Heart left ventricle (tissue), 16 donors: ENCODE measurements at regions of chr10 and their contacts with region 1.

Region 1: GRCh38 chr10:114304017-114304570 is 65.0 kb downstream of the VWA2 start:
- DNase-seq: peak in 4 of 5 donors; percentile 82 to 87 (median 85)
- ATAC-seq: peak; percentile 79 to 89 (median 85)
- H3K4me3 ChIP-seq: peak overlapping the region in 11 of 12 donors; percentile 11 to 60 (median 46)
- H3K27ac ChIP-seq: peak overlapping the region in 11 of 12 donors; percentile 8 to 71 (median 52)
- H3K4me1 ChIP-seq: peaks cover 0 to 47% (median 13%) of the 10 kb centered on the region in 12 donors
- H3K27me3 ChIP-seq: no peaks in the 10 kb centered on the region
- CTCF ChIP-seq: peak; percentile 56 to 91 (median 79)
- POLR2A ChIP-seq: no peak

Region 2: DNA sequence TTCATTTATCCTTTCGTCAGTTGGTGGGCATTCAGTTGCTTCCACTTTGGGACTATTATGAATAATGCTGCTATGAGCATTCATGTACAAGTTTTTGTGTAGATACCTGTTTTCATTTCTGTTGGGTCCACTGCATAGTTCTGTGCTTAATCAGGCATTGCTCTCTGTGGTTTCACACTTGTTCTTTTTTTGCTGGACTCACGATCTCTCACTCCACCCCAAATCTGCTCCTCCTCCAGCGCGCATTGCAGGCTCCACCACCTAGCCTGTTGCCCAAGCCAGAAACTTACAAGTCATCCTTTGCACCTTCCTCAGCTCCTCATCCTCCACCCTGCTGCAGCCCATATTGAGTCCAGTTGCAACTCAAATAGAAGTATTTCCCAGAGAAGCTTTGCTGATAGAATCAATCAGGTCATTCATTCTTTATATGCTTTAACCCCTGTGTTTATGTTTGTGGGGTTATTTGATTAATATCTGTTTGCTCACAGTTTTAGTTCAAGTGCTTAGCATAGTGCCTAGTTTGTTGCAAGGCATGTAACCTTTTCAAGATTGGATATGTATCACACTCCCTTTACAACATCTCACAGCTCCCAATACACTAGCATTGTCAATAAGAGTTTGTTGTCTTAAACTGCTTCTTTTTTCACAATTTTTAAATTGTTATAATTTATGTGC is 116.9 kb after region 1 on chr10:
- intact Hi-C with region 1: loop called in 4 of 10 experiments (anchors 5 kb)
- DNase-seq: no peak
- ATAC-seq: no peak
- H3K4me3 ChIP-seq: no peak overlapping the region
- H3K27ac ChIP-seq: no peak overlapping the region
- H3K4me1 ChIP-seq: peaks cover 0 to 5% (median 0%) of the 10 kb centered on the region in 12 donors
- H3K27me3 ChIP-seq: no peaks in the 10 kb centered on the region
- CTCF ChIP-seq: no peak
- POLR2A ChIP-seq: no peak

Region 3: GRCh38 chr10:114437456-114438292 is 133.6 kb after region 1 on chr10:
- intact Hi-C with region 1: loop called in 6 of 10 experiments (anchors 5 kb)
- DNase-seq: no peak
- ATAC-seq: no peak
- H3K4me3 ChIP-seq: no peak overlapping the region
- H3K27ac ChIP-seq: no peak overlapping the region
- H3K4me1 ChIP-seq: no peaks in the 10 kb centered on the region
- H3K27me3 ChIP-seq: no peaks in the 10 kb centered on the region
- CTCF ChIP-seq: peak; percentile 15 to 54 (median 24)
- POLR2A ChIP-seq: no peak

Region 4: GRCh38 chr10:114541081-114541796 is 237.1 kb after region 1 on chr10:
- intact Hi-C with region 1: loop called in 5 of 10 experiments (anchors 5 to 10 kb)
- DNase-seq: peak in 4 of 5 donors; percentile 70 to 88 (median 76)
- ATAC-seq: peak; percentile 84 to 95 (median 93)
- H3K4me3 ChIP-seq: no peak overlapping the region
- H3K27ac ChIP-seq: peak overlapping the region; percentile 25 to 86 (median 76)
- H3K4me1 ChIP-seq: peaks cover 17 to 81% (median 52%) of the 10 kb centered on the region in 12 donors
- H3K27me3 ChIP-seq: no peaks in the 10 kb centered on the region
- CTCF ChIP-seq: no peak
- POLR2A ChIP-seq: no peak

Region 5: DNA sequence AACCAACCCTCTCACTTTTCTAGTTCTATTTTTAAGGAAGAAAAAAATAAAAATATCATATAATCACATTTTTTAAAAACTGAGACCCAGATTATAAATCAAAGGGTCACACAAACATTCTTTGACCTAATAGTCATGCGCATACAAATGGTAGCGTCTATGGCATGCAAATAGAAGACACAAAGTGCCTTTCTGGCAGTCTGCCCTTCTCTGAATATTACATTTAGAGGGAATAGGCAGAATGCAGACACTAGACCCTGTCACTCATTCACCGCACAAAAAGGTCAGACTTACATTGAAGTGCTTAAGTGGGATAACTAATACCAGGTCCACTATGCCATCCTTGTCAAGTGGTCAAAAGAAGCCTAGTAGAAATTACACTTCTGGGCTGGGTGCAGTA is 490.9 kb after region 1 on chr10:
- intact Hi-C with region 1: loop called in 2 of 10 experiments (anchors 10 kb)
- DNase-seq: no peak
- ATAC-seq: no peak
- H3K4me3 ChIP-seq: no peak overlapping the region
- H3K27ac ChIP-seq: no peak overlapping the region
- H3K4me1 ChIP-seq: no peaks in the 10 kb centered on the region
- H3K27me3 ChIP-seq: no peaks in the 10 kb centered on the region
- CTCF ChIP-seq: no peak
- POLR2A ChIP-seq: no peak

Region 6: GRCh38 chr10:114821293-114821914 is 517.3 kb after region 1 on chr10 and contains the start of gene FHIP2A:
- intact Hi-C with region 1: loop called in 4 of 10 experiments (anchors 10 kb)
- DNase-seq: peak; percentile 78 to 91 (median 84)
- ATAC-seq: peak; percentile 51 to 95 (median 82)
- H3K4me3 ChIP-seq: peak within 1 kb of the TSS; percentile 54 to 95 (median 88)
- H3K27ac ChIP-seq: peak within 1 kb of the TSS; percentile 80 to 99 (median 97)
- H3K4me1 ChIP-seq: peaks cover 11 to 44% (median 33%) of the 10 kb centered on the region in 12 donors
- H3K27me3 ChIP-seq: no peaks in the 10 kb centered on the region
- CTCF ChIP-seq: peak in 11 of 12 donors; percentile 40 to 85 (median 63)
- POLR2A ChIP-seq: peak in 1 of 2 donors; percentile 53
- total RNA-seq, gene FHIP2A: 18.1 to 34.9 (median 28.7) TPM